Activated T-helper 1 cell treated with anti-CD3 and anti-CD28 coated beads, Interleukin-12 subunit alpha, Interleukin-12 subunit beta, Interleukin-2, Interleukin-4 antibody, amounts not matched to agents 30 ng/mL and 10 ng/mL and 1 ng/mL, durations not matched to agents 14 hours and 24 hours and 36 hours (primary cell): ENCODE measurements at regions of chr12 and their contacts with region 1.

Region 1: GRCh38 chr12:50187084-50187900 is 20.1 kb upstream of the CERS5 start:
- DNase-seq: no peak
- H3K4me3 Mint-ChIP-seq: peak overlapping the region; percentile 46
- H3K27ac Mint-ChIP-seq: peak overlapping the region; percentile 84
- H3K4me1 Mint-ChIP-seq: peaks cover 48% of the 10 kb centered on the region
- H3K27me3 Mint-ChIP-seq: no peaks in the 10 kb centered on the region

Region 2: GRCh38 chr12:50055831-50056638 is 131.3 kb before region 1 on chr12:
- intact Hi-C with region 1: no loop called
- DNase-seq: peak; percentile 34
- H3K4me3 Mint-ChIP-seq: peak overlapping the region; percentile 45
- H3K27ac Mint-ChIP-seq: peak overlapping the region; percentile 52
- H3K4me1 Mint-ChIP-seq: peaks cover 39% of the 10 kb centered on the region
- H3K27me3 Mint-ChIP-seq: peaks cover 57% of the 10 kb centered on the region

Region 3: GRCh38 chr12:50167041-50167828 is 20.1 kb before region 1 on chr12 and contains the start of gene CERS5:
- intact Hi-C with region 1: loop called (anchors 1 kb)
- DNase-seq: peak; percentile 98
- H3K4me3 Mint-ChIP-seq: peak within 1 kb of the TSS; percentile 99
- H3K27ac Mint-ChIP-seq: peak within 1 kb of the TSS; percentile 95
- H3K4me1 Mint-ChIP-seq: peaks cover 38% of the 10 kb centered on the region
- H3K27me3 Mint-ChIP-seq: no peaks in the 10 kb centered on the region
- total RNA-seq, gene CERS5: 64.2 and 67.9 TPM in 2 replicates

Region 4: GRCh38 chr12:50201978-50202521 is 14.8 kb after region 1 on chr12:
- intact Hi-C with region 1: no loop called
- DNase-seq: no peak
- H3K4me3 Mint-ChIP-seq: no peak overlapping the region
- H3K27ac Mint-ChIP-seq: no peak overlapping the region
- H3K4me1 Mint-ChIP-seq: no peaks in the 10 kb centered on the region
- H3K27me3 Mint-ChIP-seq: no peaks in the 10 kb centered on the region

Region 5: DNA sequence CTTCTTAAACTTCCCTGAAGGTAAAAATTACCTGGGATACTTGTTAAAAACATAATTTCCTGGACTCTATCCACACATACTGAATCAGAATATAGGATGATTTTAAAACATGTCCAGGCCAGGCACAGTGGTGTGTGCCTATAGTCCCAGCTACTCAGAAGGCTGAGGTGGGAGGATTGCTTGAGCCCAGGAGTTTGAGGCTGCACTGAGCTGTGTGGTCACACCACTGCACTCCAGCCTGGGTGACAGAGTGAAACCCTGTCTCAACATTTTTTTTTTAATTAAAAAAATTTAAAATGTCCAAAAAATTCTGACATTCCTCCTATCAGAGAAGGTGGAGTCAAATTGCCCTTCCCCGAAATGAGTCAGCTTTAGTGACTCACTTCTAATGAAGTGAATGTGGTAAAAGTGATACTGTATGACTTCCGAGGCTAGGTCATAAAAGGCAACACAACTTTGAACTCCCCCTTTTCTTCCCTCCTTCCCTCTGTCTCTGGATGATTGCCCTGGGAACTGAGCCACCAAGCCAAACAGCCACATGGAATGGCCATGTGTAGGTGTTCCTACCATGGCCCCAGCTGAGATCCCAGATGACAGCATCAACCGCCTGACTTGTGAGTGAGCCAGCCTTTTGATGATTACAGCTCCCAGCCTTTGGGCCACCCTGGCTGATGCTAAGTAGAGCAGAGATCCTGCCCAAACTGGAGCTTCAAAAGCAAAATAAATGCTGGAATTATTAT is 59.8 kb after region 1 on chr12:
- intact Hi-C with region 1: loop called (anchors 1 kb)
- DNase-seq: peak; percentile 2
- H3K4me3 Mint-ChIP-seq: peak overlapping the region; percentile 79
- H3K27ac Mint-ChIP-seq: peak overlapping the region; percentile 90
- H3K4me1 Mint-ChIP-seq: peaks cover 38% of the 10 kb centered on the region
- H3K27me3 Mint-ChIP-seq: peaks cover 1% of the 10 kb centered on the region

Region 6: DNA sequence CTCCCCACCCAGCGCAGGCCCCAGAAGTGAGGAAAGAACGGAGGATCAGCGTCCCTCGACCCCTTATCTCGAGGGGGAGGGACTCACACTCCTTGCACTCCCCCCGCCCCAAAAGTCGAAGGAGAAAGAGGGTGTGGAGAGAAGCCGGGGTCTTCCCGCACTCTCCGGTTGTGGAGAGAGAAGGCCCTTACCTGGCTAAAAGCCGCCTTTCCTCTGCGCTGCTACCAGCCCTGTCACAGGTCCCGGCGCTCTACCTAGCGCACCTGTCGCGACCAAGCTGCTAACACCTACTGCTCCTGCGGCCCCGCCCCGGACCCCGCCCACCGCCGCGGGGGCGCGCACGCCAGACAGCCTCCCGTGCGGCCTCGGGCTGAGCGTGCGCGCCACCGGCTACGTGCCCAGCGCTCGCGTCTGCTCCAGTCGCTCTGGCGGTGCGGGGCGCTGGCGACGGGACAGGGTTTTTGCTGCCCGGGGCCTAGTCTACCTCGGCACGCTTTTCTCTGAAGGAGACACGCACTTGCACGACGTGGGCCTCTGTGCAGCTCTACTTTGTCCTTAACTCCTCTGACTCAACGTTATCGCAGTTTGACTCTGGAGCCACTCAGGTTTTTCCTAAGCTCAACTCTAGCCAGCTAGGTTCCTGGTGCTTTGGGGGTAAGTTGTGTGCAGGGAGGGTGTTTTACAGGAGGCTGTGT is 96.1 kb after region 1 on chr12 and contains the start of gene LIMA1:
- intact Hi-C with region 1: loop called (anchors 2 kb)
- DNase-seq: peak; percentile 85
- H3K4me3 Mint-ChIP-seq: peak within 1 kb of the TSS; percentile 89
- H3K27ac Mint-ChIP-seq: peak within 1 kb of the TSS; percentile 74
- H3K4me1 Mint-ChIP-seq: peaks cover 17% of the 10 kb centered on the region
- H3K27me3 Mint-ChIP-seq: peaks cover 20% of the 10 kb centered on the region
- total RNA-seq, gene LIMA1: 64.0 and 68.4 TPM in 2 replicates